PC-9 (cell line): ENCODE measurements at regions of chr7 and their contacts with region 1.

Region 1: GRCh38 chr7:28631995-28632394 is 219.7 kb downstream of the CREB5 start:
- DNase-seq: no peak
- H3K4me3 ChIP-seq: no peak overlapping the region
- H3K27ac ChIP-seq: no peak overlapping the region
- H3K4me1 ChIP-seq: peaks cover 5% of the 10 kb centered on the region
- H3K27me3 ChIP-seq: no peaks in the 10 kb centered on the region
- CTCF ChIP-seq: no peak

Region 2: GRCh38 chr7:28706584-28706983 is 74.6 kb after region 1 on chr7:
- CTCF ChIA-PET with region 1: no interaction called
- POLR2A ChIA-PET with region 1: no interaction called
- intact Hi-C with region 1: loop called (anchors 2 kb)
- DNase-seq: peak in 1 of 2 experiments; percentile 38
- H3K4me3 ChIP-seq: no peak overlapping the region
- H3K27ac ChIP-seq: no peak overlapping the region
- H3K4me1 ChIP-seq: peaks cover 5% of the 10 kb centered on the region; the same call in 1 of the 2 replicates
- H3K27me3 ChIP-seq: no peaks in the 10 kb centered on the region
- CTCF ChIP-seq: no peak

Region 3: DNA sequence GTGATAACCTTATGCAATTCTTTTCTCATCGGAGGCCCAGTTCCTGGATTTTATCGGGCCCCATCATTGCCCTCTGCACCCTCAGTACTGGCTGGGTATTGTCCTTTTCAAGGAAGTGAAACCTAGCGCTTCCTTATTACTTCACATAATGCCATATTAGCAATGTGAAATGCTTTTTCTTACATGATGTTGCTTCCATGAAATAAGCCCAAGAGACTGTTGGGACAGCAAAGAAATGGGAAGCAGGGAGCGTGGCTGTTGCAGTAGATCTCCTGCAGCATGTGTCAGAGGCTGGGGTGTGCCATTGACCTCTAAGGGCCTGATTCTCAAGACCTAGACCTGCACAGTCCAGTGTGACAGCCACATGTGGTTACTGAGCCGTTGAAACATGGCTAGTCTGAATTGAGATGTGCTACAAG is 570.7 kb after region 1 on chr7:
- CTCF ChIA-PET with region 1: interaction called, 14 read pairs
- POLR2A ChIA-PET with region 1: no interaction called
- intact Hi-C with region 1: no loop called
- DNase-seq: no peak
- H3K4me3 ChIP-seq: no peak overlapping the region
- H3K27ac ChIP-seq: no peak overlapping the region
- H3K4me1 ChIP-seq: peaks cover 6% of the 10 kb centered on the region
- H3K27me3 ChIP-seq: 0 out of 2 replicates have a peak, but pooled peaks cover 4% of the 10 kb centered on the region
- CTCF ChIP-seq: no peak

Region 4: GRCh38 chr7:29360633-29361625 is 728.9 kb after region 1 on chr7:
- CTCF ChIA-PET with region 1: no interaction called
- POLR2A ChIA-PET with region 1: no interaction called
- intact Hi-C with region 1: no loop called
- DNase-seq: no peak
- H3K4me3 ChIP-seq: no peak overlapping the region
- H3K27ac ChIP-seq: no peak overlapping the region
- H3K4me1 ChIP-seq: peaks cover 12% of the 10 kb centered on the region
- H3K27me3 ChIP-seq: no peaks in the 10 kb centered on the region
- CTCF ChIP-seq: no peak